Activated CD8-positive, alpha-beta T cell treated with anti-CD3 and anti-CD28 coated beads for 36 hours (primary cell): ENCODE measurements at regions of chr10 and their contacts with region 1.

Region 1: GRCh38 chr10:120423431-120424197 is 33.4 kb upstream of the PLPP4 start:
- DNase-seq: peak; percentile 60
- ATAC-seq: peak; percentile 60
- H3K4me3 Mint-ChIP-seq: no peak overlapping the region
- H3K27ac Mint-ChIP-seq: no peak overlapping the region
- H3K4me1 Mint-ChIP-seq: no peaks in the 10 kb centered on the region
- H3K27me3 Mint-ChIP-seq: no peaks in the 10 kb centered on the region
- CTCF ChIP-seq: peak; percentile 63

Region 2: GRCh38 chr10:120735773-120736371 is 312.3 kb after region 1 on chr10:
- CTCF ChIA-PET with region 1: interaction called, 6 read pairs
- POLR2A ChIA-PET with region 1: no interaction called
- intact Hi-C with region 1: loop called (anchors 5 kb)
- DNase-seq: no peak
- ATAC-seq: peak; percentile 35
- H3K4me3 Mint-ChIP-seq: no peak overlapping the region
- H3K27ac Mint-ChIP-seq: no peak overlapping the region
- H3K4me1 Mint-ChIP-seq: no peaks in the 10 kb centered on the region
- H3K27me3 Mint-ChIP-seq: peaks cover 8% of the 10 kb centered on the region
- CTCF ChIP-seq: peak; percentile 78